Activated CD4-positive, alpha-beta memory T cell treated with anti-CD3 and anti-CD28 coated beads, Interleukin-2, amount 10 ng/mL, durations not matched to agents 7 days and 5 days (primary cell): ENCODE measurements at regions of chr4 and their contacts with region 1.

Region 1: GRCh38 chr4:6200011-6200921 is at the start of gene JAKMIP1:
- DNase-seq: peak; percentile 93
- H3K4me3 Mint-ChIP-seq: peak within 1 kb of the TSS; percentile 92
- H3K27ac Mint-ChIP-seq: peak within 1 kb of the TSS; percentile 95
- H3K4me1 Mint-ChIP-seq: peaks cover 50% of the 10 kb centered on the region
- H3K27me3 Mint-ChIP-seq: no peaks in the 10 kb centered on the region
- total RNA-seq, gene JAKMIP1: 43.8 to 44.4 TPM

Region 2: DNA sequence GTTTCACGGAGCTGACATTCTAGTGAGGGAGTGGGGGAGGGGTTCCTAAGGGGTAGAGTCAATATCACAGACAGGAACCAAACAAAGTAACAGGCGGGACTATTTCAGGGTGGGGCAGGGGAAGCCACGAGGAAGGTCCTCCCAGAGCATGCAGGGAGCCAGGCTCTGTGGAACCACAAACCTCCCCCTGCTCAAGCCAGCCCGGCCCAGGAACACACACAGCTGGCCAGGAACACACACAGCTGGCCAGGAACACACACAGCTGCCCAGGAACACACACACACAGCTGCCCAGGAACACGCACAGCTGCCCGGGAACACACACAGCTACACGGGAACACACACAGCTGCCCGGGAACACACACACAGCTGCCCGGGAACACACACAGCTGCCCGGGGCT is 516.7 kb before region 1 on chr4:
- CTCF ChIA-PET with region 1: no interaction called
- POLR2A ChIA-PET with region 1: no interaction called
- DNase-seq: no peak
- H3K4me3 Mint-ChIP-seq: no peak overlapping the region
- H3K27ac Mint-ChIP-seq: no peak overlapping the region
- H3K4me1 Mint-ChIP-seq: no peaks in the 10 kb centered on the region
- H3K27me3 Mint-ChIP-seq: no peaks in the 10 kb centered on the region

Region 3: DNA sequence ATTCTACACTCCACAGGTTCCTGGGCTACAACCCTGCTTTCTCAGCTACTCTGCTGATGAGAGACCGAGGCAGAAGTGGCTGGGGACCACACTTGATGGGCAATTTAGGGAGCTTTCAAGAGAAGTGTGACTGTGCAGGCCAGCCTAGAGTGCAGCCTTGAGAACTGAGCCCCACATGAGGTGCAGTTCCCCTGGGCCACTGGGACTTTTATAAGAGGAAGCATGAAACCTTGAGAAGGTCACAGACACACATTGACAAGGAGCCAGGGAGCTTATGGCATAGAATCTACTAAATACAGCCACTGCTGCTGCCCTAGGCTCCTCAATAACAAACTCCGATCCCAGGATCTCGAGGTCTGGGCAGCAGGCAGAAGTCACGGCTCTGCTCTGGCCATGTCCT is 195.1 kb before region 1 on chr4:
- CTCF ChIA-PET with region 1: no interaction called
- POLR2A ChIA-PET with region 1: no interaction called
- DNase-seq: no peak
- H3K4me3 Mint-ChIP-seq: no peak overlapping the region
- H3K27ac Mint-ChIP-seq: no peak overlapping the region
- H3K4me1 Mint-ChIP-seq: no peaks in the 10 kb centered on the region
- H3K27me3 Mint-ChIP-seq: peaks cover 24% of the 10 kb centered on the region

Region 4: DNA sequence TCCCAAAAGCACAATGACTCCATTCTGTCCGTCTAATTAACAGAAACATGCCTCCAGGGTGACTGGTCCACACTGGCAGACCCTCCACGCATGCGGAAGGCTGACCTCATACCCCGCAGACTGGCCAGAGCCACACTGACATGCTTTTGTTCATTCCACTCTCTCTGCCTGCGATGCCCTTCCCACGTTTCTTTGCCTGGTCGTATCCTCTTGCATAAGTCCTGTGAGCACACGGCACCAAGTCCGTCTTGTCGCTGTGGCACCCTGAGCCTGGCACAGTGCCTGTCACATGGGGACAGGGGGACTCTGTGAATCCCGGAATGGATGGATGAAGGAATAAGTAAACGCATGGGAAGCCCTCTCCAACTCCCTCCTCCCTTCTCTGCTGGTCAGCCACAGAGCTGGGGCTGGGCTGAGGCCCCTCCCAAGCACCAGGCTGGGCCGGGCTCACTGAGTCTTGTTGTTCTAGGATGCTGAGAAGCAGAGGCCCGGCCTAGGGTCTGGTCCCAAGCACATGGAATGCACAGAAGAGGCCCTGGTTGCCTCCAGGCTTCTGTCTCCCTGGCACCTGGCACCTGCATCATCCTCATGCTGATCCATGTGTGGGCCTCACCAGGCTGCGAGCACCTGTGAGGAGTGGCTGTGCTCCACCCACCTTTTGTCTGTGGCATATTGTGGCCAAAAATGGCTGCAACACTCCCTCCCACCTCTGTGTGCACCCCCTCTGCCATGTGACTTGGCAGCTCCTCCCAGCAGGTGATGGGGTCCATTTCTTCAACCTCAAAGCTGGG is 143.1 kb before region 1 on chr4:
- CTCF ChIA-PET with region 1: no interaction called
- POLR2A ChIA-PET with region 1: no interaction called
- DNase-seq: no peak
- H3K4me3 Mint-ChIP-seq: no peak overlapping the region
- H3K27ac Mint-ChIP-seq: no peak overlapping the region
- H3K4me1 Mint-ChIP-seq: no peaks in the 10 kb centered on the region
- H3K27me3 Mint-ChIP-seq: no peaks in the 10 kb centered on the region

Region 5: GRCh38 chr4:6105311-6105911 is 94.9 kb before region 1 on chr4:
- CTCF ChIA-PET with region 1: no interaction called
- POLR2A ChIA-PET with region 1: no interaction called
- DNase-seq: no peak
- H3K4me3 Mint-ChIP-seq: no peak overlapping the region
- H3K27ac Mint-ChIP-seq: no peak overlapping the region
- H3K4me1 Mint-ChIP-seq: peaks cover 1% of the 10 kb centered on the region
- H3K27me3 Mint-ChIP-seq: no peaks in the 10 kb centered on the region

Region 6: GRCh38 chr4:6134612-6135220 is 65.5 kb before region 1 on chr4:
- CTCF ChIA-PET with region 1: interaction called, 33 read pairs
- POLR2A ChIA-PET with region 1: interaction called, 54 read pairs
- DNase-seq: peak; percentile 85
- H3K4me3 Mint-ChIP-seq: no peak overlapping the region
- H3K27ac Mint-ChIP-seq: peak overlapping the region; percentile 77
- H3K4me1 Mint-ChIP-seq: peaks cover 41% of the 10 kb centered on the region
- H3K27me3 Mint-ChIP-seq: no peaks in the 10 kb centered on the region

Region 7: GRCh38 chr4:6143603-6144181 is 56.6 kb before region 1 on chr4:
- CTCF ChIA-PET with region 1: no interaction called
- POLR2A ChIA-PET with region 1: interaction called, 24 read pairs
- DNase-seq: no peak
- H3K4me3 Mint-ChIP-seq: no peak overlapping the region
- H3K27ac Mint-ChIP-seq: no peak overlapping the region
- H3K4me1 Mint-ChIP-seq: peaks cover 21% of the 10 kb centered on the region
- H3K27me3 Mint-ChIP-seq: no peaks in the 10 kb centered on the region

Region 8: DNA sequence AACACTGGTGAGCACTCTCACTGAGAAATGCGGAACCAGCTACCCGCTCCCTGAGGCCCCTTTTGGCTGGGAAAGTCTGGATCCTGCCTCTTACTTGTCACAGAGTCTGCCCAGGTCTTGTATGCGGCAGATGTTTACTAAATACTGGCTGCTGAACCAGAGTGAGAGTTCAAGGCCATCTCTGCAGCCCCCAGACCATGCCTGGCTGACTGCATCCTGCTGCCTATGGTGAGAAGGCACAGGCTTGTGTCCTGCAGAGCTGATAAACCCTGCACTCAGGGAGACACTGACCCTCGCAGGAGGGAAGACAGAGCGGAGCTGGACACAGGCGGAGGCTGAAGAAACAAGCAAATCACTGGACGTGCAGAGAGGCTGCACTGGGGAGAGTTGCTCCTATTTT is 46.4 kb before region 1 on chr4:
- CTCF ChIA-PET with region 1: interaction called, 6 read pairs
- POLR2A ChIA-PET with region 1: interaction called, 81 read pairs
- DNase-seq: no peak
- H3K4me3 Mint-ChIP-seq: no peak overlapping the region
- H3K27ac Mint-ChIP-seq: peak overlapping the region; percentile 74
- H3K4me1 Mint-ChIP-seq: peaks cover 78% of the 10 kb centered on the region
- H3K27me3 Mint-ChIP-seq: no peaks in the 10 kb centered on the region

Region 9: DNA sequence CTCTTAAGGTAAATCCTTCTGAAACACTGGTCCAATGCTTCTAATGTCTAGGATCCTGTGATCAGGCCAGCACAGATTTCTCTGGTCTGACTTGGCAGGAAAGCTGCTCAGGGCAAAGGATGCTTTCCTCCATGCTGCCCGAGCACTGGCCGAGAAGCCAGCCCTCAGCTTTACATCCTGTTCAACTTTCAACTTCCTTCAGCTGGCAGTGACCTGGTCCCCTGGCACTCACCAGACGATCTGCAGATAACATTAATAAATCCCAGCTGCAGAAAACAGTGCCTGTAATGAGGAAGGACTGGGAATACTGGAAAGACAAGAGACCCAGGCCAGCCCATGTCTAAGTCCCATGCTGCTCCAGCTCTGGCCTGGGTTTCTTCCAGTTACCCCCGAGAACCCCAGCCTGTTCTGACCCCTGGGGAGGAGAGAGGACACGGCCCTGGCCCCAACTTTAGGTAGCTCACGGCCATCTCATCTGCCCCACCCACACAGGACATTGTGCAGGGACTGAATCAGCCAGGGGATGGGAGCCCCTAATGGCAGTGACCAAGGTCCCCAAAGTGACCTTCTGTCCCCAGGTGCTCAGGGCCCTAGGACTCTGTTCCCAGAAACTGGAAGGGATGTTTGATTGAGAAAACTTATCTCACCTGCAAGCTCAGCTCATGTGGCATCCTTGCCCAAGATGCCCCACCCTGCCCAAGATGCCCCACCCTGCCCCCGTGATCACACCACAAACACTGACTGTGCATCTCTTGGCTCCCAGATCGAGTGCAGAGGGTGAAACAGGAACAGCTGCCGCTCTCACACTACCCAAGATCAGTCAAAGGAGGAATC is 28.0 kb before region 1 on chr4:
- CTCF ChIA-PET with region 1: interaction called, 12 read pairs
- POLR2A ChIA-PET with region 1: interaction called, 568 read pairs
- DNase-seq: peak; percentile 81
- H3K4me3 Mint-ChIP-seq: peak overlapping the region; percentile 70
- H3K27ac Mint-ChIP-seq: peak overlapping the region; percentile 97
- H3K4me1 Mint-ChIP-seq: peaks cover 91% of the 10 kb centered on the region
- H3K27me3 Mint-ChIP-seq: no peaks in the 10 kb centered on the region